ENCODE measurements at regions of chr1 and their contacts with region 1.

Region 1: DNA sequence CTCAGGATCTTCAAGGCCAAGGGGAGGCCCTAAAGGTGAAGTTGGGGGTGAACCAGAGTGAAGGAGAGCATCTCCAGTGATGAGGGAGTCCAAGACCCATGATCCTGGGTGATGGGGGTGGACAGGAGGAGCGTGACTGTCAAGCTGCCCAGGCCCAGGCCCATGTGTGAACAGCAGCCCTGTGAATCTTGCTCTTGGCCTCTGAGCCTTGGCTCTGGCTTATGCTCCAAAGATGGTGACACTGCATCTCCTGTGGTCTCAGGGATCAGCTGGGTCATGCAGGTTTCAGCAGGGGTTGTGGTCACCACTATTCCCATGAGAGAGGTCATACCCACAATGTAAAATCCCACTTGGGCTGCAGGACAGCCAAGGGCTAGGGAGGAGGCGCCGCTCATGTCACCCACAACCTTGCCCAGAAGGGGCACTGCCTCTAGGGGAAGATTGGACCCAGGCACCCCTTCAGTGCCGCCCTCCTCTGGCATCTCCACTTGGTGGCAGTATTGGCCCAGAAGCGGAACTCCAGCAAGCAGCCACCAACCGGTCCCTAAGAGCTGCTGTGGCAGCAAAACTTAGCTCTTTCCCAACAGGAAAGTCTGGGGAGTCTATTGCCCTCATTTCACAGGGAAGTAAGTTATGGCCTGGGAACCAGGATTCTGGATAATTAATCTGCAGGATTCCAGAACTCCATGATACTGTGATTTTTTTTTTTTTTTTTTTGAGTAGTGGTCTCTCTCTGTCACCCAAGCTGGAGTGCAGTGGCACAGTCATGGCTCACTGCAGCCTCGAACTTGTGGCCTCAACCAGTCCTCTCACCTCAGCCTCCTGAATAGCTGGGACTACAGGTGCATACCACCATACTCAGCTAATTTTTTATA is 7.5 kb upstream of the WNT3A start:
- DNase-seq: peak; percentile 11
- H3K4me3 ChIP-seq: no peak overlapping the region
- CTCF ChIP-seq: peak; percentile 69

Region 2: DNA sequence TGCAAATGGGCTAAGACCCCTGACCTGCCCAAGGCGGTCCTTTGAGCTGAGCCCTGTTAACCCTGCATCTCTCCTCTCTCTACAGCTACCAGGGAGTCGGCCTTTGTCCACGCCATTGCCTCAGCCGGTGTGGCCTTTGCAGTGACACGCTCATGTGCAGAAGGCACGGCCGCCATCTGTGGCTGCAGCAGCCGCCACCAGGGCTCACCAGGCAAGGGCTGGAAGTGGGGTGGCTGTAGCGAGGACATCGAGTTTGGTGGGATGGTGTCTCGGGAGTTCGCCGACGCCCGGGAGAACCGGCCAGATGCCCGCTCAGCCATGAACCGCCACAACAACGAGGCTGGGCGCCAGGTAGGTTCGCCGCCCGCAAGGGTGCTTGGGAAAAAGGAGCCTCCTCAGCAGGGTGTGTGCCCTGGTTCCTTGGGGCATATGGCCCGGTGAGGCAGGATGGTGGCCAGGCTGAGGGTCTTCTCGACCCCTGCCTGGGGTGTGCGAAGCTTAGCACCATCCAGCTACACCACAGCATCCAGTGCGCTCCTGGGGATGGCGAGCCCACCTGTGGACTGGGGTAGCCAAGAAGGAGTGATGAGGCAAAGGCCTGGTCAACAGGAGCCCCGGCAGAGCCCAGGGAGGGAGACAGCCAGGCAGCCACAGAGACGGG is 51.4 kb after region 1 on chr1:
- in situ Hi-C with region 1: loop called (anchors 5 kb)
- DNase-seq: no peak
- H3K4me3 ChIP-seq: no peak overlapping the region
- CTCF ChIP-seq: no peak

Region 3: DNA sequence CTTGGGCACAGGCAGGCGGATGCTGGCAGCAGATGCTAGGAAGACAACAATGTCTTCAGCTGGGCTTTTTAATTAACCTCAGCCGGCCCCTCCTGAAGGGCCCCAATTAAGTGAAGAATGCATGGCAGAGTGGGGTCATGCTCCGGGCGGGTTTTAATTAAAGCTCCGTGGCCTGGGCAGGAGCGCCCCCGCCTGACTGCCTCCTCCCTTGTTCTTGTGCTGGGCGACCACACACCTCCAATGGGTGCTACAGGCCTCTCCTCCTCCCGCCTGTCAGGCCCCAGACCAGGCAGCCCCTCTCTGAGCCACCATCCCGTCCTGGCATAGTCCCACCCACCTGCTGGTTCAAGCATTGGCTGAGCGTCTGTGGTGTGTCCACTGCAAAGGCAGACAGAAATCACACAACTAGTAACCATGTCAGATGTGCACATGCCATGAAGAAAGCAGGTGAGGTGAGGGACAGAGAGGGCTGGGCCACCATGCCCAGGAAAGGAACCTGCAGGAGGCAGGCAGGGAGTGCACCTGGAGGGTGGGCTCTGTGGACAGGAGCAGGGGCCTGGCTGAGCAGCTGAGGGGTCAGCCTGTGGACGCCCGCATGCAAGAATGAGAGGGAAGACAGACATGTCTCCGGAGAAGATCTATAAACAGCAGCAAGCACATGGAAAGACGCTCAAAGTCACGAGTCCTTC is 74.7 kb after region 1 on chr1:
- in situ Hi-C with region 1: no loop called
- DNase-seq: no peak
- H3K4me3 ChIP-seq: no peak overlapping the region
- CTCF ChIP-seq: no peak